Activated T-helper 2 cell treated with anti-CD3 and anti-CD28 coated beads, Interferon-gamma antibody, Interleukin-2, Interleukin-4, amounts not matched to agents 10 μg/mL and 5 μg/mL and 100 μg/mL, durations not matched to agents 14 hours and 24 hours and 36 hours (primary cell): ENCODE measurements at regions of chr4 and their contacts with region 1.

Region 1: GRCh38 chr4:119286377-119287002 is 35.4 kb downstream of the FABP2 start:
- DNase-seq: no peak
- H3K4me3 Mint-ChIP-seq: no peak overlapping the region
- H3K27ac Mint-ChIP-seq: no peak overlapping the region
- H3K4me1 Mint-ChIP-seq: peaks cover 15% of the 10 kb centered on the region
- H3K27me3 Mint-ChIP-seq: no peaks in the 10 kb centered on the region

Region 2: DNA sequence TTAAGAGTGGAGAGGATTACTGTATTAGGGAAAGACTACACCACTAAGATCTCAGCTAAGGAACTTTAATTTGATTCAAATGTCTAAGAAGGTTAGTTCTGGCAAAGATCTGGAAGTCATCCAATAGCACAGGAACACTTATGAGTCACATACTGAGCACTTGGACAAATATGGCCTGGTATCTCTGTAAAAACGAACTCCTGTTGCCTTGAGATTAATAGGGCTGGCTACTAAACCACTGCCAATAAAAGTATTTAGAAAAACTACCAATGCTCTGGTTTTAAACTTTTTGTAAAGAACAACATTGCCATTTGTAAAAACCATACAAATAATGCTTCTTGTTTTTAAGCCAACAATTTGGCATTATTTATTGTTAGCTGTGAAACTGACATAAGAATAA is 521.1 kb before region 1 on chr4:
- intact Hi-C with region 1: loop called (anchors 10 kb)
- DNase-seq: no peak
- H3K4me3 Mint-ChIP-seq: no peak overlapping the region
- H3K27ac Mint-ChIP-seq: no peak overlapping the region
- H3K4me1 Mint-ChIP-seq: no peaks in the 10 kb centered on the region
- H3K27me3 Mint-ChIP-seq: no peaks in the 10 kb centered on the region

Region 3: GRCh38 chr4:118981839-118982381 is 304.6 kb before region 1 on chr4:
- intact Hi-C with region 1: loop called (anchors 2 kb)
- DNase-seq: peak; percentile 10
- H3K4me3 Mint-ChIP-seq: no peak overlapping the region
- H3K27ac Mint-ChIP-seq: no peak overlapping the region
- H3K4me1 Mint-ChIP-seq: peaks cover 2% of the 10 kb centered on the region
- H3K27me3 Mint-ChIP-seq: peaks cover 12% of the 10 kb centered on the region

Region 4: GRCh38 chr4:119041951-119042560 is 244.4 kb before region 1 on chr4:
- intact Hi-C with region 1: loop called (anchors 1 kb)
- DNase-seq: peak; percentile 28
- H3K4me3 Mint-ChIP-seq: no peak overlapping the region
- H3K27ac Mint-ChIP-seq: no peak overlapping the region
- H3K4me1 Mint-ChIP-seq: peaks cover 5% of the 10 kb centered on the region
- H3K27me3 Mint-ChIP-seq: peaks cover 9% of the 10 kb centered on the region

Region 5: GRCh38 chr4:119212234-119212963 is 74.1 kb before region 1 on chr4 and contains the start of gene USP53:
- intact Hi-C with region 1: loop called (anchors 5 kb)
- DNase-seq: peak; percentile 93
- H3K4me3 Mint-ChIP-seq: peak within 1 kb of the TSS; percentile 91
- H3K27ac Mint-ChIP-seq: peak within 1 kb of the TSS; percentile 88
- H3K4me1 Mint-ChIP-seq: peaks cover 33% of the 10 kb centered on the region
- H3K27me3 Mint-ChIP-seq: peaks cover 8% of the 10 kb centered on the region
- total RNA-seq, gene USP53: 6.6 and 7.3 TPM in 2 replicates

Region 6: GRCh38 chr4:119268451-119268850 is 18.0 kb before region 1 on chr4:
- intact Hi-C with region 1: no loop called
- DNase-seq: no peak
- H3K4me3 Mint-ChIP-seq: no peak overlapping the region
- H3K27ac Mint-ChIP-seq: no peak overlapping the region
- H3K4me1 Mint-ChIP-seq: no peaks in the 10 kb centered on the region
- H3K27me3 Mint-ChIP-seq: no peaks in the 10 kb centered on the region

Region 7: DNA sequence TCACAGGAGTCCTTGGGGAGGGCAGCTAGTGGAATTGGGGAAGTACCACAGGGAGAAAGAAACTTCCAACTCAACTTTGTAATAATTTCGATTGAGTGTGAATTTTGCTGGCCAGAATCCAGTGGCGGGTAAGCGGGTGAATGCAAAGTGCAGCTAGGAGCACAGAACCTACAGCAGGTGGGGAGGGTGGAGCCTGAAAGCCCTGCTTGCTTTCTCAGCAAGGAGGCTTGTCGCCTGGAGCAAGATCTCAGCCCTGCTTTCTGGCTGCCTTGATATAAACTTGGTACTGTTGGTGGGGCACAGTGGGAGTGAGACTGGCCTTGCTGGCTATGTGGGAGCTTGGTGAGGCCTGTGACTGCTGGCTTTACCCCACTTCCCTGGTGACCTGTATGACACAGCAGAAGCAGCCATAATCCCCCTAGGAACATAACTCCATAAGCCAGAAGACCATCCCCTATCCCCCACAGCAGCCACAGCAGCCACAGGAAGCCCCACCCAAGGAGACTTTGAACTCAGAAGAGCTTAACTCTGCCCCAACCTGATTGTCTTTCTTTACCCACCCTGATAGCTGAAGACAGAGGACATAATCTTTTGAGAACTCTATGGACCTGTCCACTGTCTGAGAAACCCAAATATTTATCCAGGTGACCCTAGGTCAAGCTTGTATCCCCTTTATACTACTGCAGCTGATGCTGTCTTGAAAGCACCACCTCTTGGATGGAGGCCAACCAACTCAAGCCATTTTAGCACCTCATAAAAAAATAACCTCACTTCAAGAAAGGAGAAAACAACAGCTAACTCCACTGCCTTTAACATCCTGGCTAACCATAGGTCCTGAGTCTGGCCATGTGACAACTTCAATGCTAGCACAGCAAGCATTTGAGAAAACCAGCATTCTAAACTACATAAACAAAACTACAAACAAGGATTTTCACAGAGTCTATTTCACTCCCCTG is 429.3 kb after region 1 on chr4:
- intact Hi-C with region 1: no loop called
- DNase-seq: no peak
- H3K4me3 Mint-ChIP-seq: no peak overlapping the region
- H3K27ac Mint-ChIP-seq: no peak overlapping the region
- H3K4me1 Mint-ChIP-seq: no peaks in the 10 kb centered on the region
- H3K27me3 Mint-ChIP-seq: no peaks in the 10 kb centered on the region

Region 8: GRCh38 chr4:120037411-120037810 is 750.9 kb after region 1 on chr4:
- intact Hi-C with region 1: no loop called
- DNase-seq: no peak
- H3K4me3 Mint-ChIP-seq: no peak overlapping the region
- H3K27ac Mint-ChIP-seq: no peak overlapping the region
- H3K4me1 Mint-ChIP-seq: no peaks in the 10 kb centered on the region
- H3K27me3 Mint-ChIP-seq: peaks cover 11% of the 10 kb centered on the region